ENCODE measurements at regions of chr5 and their contacts with region 1.

Region 1: GRCh38 chr5:3751846-3752245 is 156.2 kb downstream of the IRX1 start:
- DNase-seq: no peak
- H3K4me3 ChIP-seq: no peak overlapping the region
- H3K27ac ChIP-seq: no peak overlapping the region
- H3K4me1 ChIP-seq: no peaks in the 10 kb centered on the region
- H3K27me3 ChIP-seq: no peaks in the 10 kb centered on the region
- CTCF ChIP-seq: no peak

Region 2: GRCh38 chr5:3075309-3075708 is 676.5 kb before region 1 on chr5:
- CTCF ChIA-PET with region 1: no interaction called
- dilution Hi-C with region 1: no loop called
- in situ Hi-C with region 1: no loop called
- intact Hi-C with region 1: no loop called
- DNase-seq: no peak
- H3K4me3 ChIP-seq: no peak overlapping the region
- H3K27ac ChIP-seq: no peak overlapping the region
- H3K4me1 ChIP-seq: no peaks in the 10 kb centered on the region
- H3K27me3 ChIP-seq: no peaks in the 10 kb centered on the region
- CTCF ChIP-seq: peak in 1 of 2 donors; percentile 10

Region 3: DNA sequence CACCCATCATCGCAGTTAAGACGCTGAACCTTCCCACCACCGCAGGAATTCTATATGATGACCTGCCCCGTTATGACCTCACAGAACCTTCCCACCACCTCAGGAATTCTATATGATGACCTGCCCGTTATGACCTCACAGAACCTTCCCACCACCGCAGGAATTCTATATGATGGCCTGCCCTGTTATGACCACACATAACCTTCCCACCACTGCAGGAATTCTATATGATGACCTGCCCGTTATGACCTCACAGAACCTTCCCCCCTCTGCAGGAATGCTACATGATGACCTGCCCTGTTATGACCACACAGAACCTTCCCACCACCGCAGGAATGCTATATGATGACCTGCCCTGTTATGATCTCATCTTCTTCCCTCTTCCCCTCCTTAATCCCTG is 91.9 kb before region 1 on chr5:
- CTCF ChIA-PET with region 1: no interaction called
- dilution Hi-C with region 1: loop called (anchors 5 kb)
- in situ Hi-C with region 1: no loop called
- intact Hi-C with region 1: no loop called
- DNase-seq: peak; percentile 27
- H3K4me3 ChIP-seq: no peak overlapping the region
- H3K27ac ChIP-seq: no peak overlapping the region
- H3K4me1 ChIP-seq: peaks cover 4% of the 10 kb centered on the region
- H3K27me3 ChIP-seq: no peaks in the 10 kb centered on the region
- CTCF ChIP-seq: no peak

Measured in mammary epithelial cell (primary cell).